Activated CD4-positive, alpha-beta T cell treated with anti-CD3 and anti-CD28 coated beads for 36 hours (primary cell): ENCODE measurements at regions of chr12 and their contacts with region 1.

Region 1: DNA sequence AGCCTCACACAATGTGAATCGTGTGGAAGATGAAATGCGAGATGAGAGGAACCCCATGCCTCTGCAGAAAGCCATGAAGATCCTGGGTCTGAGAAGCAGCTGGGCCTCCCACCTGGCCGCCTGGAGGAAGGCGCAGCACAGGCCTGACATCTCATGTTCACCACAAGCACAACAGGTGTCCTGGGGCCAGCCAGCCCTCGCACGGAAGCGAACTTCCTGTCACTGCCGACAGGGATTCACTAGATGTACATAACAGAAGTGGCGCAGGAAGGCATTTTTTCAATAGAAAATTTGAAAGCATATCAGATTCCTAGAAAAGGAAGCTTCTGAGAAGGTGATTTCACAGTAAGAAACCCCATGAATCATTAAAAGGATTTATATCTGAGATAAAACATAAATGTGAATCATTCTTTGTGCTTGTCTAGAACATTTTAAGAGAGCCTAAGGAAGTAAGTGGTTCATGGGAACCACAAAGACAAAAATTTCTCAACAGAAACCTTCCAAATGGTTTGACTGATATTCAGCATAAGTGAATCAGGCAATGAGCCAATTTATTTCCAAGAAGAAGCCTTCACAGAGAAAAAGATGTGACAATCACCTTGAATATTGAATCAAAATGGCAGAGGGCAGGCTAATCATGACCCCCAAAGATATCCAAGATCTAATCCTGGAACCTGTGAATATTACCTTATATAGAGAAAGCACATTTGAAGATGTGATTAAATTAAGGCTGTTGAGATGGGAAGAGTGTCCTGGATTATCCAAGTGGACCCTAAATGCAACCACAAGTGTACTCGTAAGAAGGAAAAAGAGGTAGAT is 311.9 kb downstream of the DUSP6 start:
- DNase-seq: peak; percentile 92
- ATAC-seq: peak; percentile 78
- H3K4me3 Mint-ChIP-seq: peak overlapping the region; percentile 40
- H3K27ac Mint-ChIP-seq: peak overlapping the region; percentile 99
- H3K4me1 Mint-ChIP-seq: peaks cover 54% of the 10 kb centered on the region
- H3K27me3 Mint-ChIP-seq: no peaks in the 10 kb centered on the region

Region 2: DNA sequence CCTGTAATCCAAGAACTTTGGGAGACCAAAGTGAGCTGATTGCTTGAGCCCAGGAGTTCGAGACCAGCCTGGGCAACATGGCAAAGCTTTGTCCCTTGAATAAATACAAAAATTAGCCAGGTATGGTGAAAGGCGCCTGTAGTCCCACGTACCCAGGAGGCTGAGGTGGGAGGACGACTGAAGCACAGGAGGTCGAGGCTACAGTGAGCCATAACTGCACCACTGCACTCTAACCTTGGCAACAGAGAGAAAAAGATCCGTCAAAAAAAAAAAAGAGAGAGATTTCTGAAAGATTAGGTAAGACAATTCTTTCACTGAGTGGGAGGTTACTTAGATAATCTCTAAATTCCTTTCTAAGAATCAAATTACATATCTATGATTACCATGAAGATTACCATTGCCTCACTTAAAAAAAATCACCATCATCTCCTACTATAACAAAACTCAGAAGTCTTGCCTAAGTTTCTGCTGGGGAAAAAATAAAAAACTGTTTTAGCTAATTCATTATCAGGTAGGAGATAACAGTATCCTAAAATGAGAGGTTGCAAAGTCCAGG is 54.8 kb before region 1 on chr12:
- CTCF ChIA-PET with region 1: no interaction called
- POLR2A ChIA-PET with region 1: no interaction called
- intact Hi-C with region 1: no loop called
- DNase-seq: no peak
- ATAC-seq: no peak
- H3K4me3 Mint-ChIP-seq: no peak overlapping the region
- H3K27ac Mint-ChIP-seq: no peak overlapping the region
- H3K4me1 Mint-ChIP-seq: no peaks in the 10 kb centered on the region
- H3K27me3 Mint-ChIP-seq: peaks cover 15% of the 10 kb centered on the region

Region 3: DNA sequence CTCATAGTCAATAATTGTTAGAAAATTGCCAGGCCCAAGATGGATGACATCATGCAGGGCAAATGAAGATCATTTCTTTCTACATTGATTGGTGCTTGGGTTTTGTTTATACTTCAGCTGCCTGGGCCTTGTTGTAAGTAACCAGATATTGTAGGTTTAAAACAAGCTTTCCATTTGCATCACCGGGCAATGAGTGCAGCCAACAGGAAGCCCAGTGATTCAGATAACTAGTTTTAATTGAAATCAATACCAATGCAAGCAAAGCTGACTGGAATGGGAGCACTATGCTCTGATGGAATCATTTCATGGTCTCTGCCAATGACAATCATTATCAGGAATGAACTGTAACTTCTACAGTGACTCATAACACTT is 32.7 kb after region 1 on chr12:
- CTCF ChIA-PET with region 1: interaction called, 4 read pairs
- POLR2A ChIA-PET with region 1: interaction called, 6 read pairs
- intact Hi-C with region 1: loop called (anchors 1 kb)
- DNase-seq: peak; percentile 42
- ATAC-seq: peak; percentile 20
- H3K4me3 Mint-ChIP-seq: no peak overlapping the region
- H3K27ac Mint-ChIP-seq: peak overlapping the region; percentile 91
- H3K4me1 Mint-ChIP-seq: peaks cover 44% of the 10 kb centered on the region
- H3K27me3 Mint-ChIP-seq: no peaks in the 10 kb centered on the region

Region 4: GRCh38 chr12:89225808-89226411 is 185.6 kb after region 1 on chr12:
- CTCF ChIA-PET with region 1: interaction called, 4 read pairs
- POLR2A ChIA-PET with region 1: interaction called, 5 read pairs
- intact Hi-C with region 1: loop called (anchors 1 kb)
- DNase-seq: peak; percentile 71
- ATAC-seq: peak; percentile 80
- H3K4me3 Mint-ChIP-seq: peak overlapping the region; percentile 58
- H3K27ac Mint-ChIP-seq: peak overlapping the region; percentile 99
- H3K4me1 Mint-ChIP-seq: peaks cover 68% of the 10 kb centered on the region
- H3K27me3 Mint-ChIP-seq: no peaks in the 10 kb centered on the region

Region 5: GRCh38 chr12:89470741-89471509 is 430.6 kb after region 1 on chr12:
- CTCF ChIA-PET with region 1: interaction called, 6 read pairs
- POLR2A ChIA-PET with region 1: no interaction called
- intact Hi-C with region 1: loop called in 1 of 2 experiments (anchors 2 kb)
- DNase-seq: peak; percentile 14
- ATAC-seq: peak; percentile 57
- H3K4me3 Mint-ChIP-seq: no peak overlapping the region
- H3K27ac Mint-ChIP-seq: peak overlapping the region; percentile 69
- H3K4me1 Mint-ChIP-seq: peaks cover 57% of the 10 kb centered on the region
- H3K27me3 Mint-ChIP-seq: no peaks in the 10 kb centered on the region

Region 6: DNA sequence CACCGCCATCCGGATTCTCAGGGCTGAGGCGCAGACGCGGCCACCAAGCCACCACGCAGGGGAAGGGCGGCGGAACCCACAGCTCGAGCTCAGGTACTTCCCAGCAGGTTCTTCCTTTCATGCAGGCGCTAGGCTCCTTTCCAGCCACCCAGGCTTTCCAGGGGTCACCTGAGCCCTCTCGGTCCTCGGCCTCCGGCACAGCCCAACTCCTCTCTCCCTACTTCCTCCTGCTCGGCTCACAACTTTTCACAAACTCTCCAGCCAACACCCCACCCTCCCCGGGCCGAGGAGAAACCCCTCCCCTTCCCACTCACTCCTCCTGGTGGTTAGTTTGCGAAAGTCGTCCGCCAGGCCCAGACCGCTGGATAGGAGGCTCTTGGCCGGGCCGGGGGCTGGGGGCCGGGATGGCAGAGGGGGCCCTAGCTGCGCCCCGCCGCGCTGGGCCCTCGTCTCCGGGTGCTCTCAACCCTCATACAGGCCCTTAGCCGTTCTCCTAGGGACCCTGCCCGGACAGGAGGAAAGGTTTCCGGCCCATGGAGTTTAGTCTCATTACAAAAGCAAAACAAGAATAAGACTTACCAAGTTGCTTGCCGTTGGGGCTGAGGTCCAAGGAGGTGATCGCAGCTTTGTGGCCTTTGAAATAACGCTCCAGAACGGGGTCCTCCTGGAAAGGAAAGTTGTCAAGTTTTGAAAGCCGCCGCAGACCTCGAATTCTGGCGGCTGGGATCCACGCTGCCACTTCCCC is 484.4 kb after region 1 on chr12 and contains the start of gene GALNT4:
- CTCF ChIA-PET with region 1: interaction called, 6 read pairs
- POLR2A ChIA-PET with region 1: interaction called, 7 read pairs
- intact Hi-C with region 1: loop called (anchors 1 to 5 kb)
- DNase-seq: peak; percentile 84
- ATAC-seq: peak; percentile 64
- H3K4me3 Mint-ChIP-seq: peak within 1 kb of the TSS; percentile 81
- H3K27ac Mint-ChIP-seq: peak within 1 kb of the TSS; percentile 94
- H3K4me1 Mint-ChIP-seq: peaks cover 53% of the 10 kb centered on the region
- H3K27me3 Mint-ChIP-seq: no peaks in the 10 kb centered on the region
- total RNA-seq, gene GALNT4: 3.0 to 4.6 TPM

Region 7: GRCh38 chr12:89949457-89950195 is 909.3 kb after region 1 on chr12:
- CTCF ChIA-PET with region 1: no interaction called
- POLR2A ChIA-PET with region 1: no interaction called
- intact Hi-C with region 1: loop called in 1 of 2 experiments (anchors 10 kb)
- DNase-seq: peak; percentile 51
- ATAC-seq: peak; percentile 82
- H3K4me3 Mint-ChIP-seq: no peak overlapping the region
- H3K27ac Mint-ChIP-seq: peak overlapping the region; percentile 64
- H3K4me1 Mint-ChIP-seq: peaks cover 50% of the 10 kb centered on the region
- H3K27me3 Mint-ChIP-seq: no peaks in the 10 kb centered on the region